Activated CD8-positive, alpha-beta T cell treated with anti-CD3 and anti-CD28 coated beads for 36 hours (primary cell): ENCODE measurements at regions of chr11 and their contacts with region 1.

Region 1: DNA sequence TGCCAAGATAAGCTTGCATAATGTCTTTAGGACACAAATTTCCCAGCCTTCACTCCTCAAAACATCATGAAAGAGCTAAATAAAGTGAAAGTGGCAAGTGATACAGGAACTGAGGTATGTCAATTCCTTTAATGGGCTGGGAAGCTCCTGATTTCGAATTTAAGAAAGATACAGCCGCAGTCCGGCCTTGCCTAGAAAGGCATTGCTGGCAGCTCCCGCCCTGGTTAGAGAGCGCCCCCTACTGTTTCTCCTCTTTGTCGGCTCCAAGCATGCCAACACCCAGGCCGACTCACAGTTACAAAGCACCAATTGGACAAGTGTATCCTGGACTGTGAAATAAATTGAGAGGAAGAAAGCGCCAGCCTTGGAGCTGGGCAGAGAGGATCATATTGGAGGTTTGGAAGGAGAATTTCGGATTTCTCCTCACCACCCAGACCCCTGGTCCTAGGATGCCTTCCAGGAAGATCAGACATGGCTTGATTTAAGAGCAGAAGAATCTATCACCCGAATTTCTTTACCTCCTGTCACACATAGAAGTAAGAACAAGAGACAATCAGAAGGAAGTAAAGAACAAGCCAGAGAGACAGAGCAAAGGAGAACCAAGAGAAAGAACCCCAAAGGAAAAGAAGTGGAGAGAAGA is 84.0 kb downstream of the FAM76B start:
- DNase-seq: peak; percentile 91
- ATAC-seq: peak; percentile 83
- H3K4me3 Mint-ChIP-seq: no peak overlapping the region
- H3K27ac Mint-ChIP-seq: no peak overlapping the region
- H3K4me1 Mint-ChIP-seq: peaks cover 9% of the 10 kb centered on the region
- H3K27me3 Mint-ChIP-seq: peaks cover 5% of the 10 kb centered on the region
- CTCF ChIP-seq: peak; percentile 86

Region 2: DNA sequence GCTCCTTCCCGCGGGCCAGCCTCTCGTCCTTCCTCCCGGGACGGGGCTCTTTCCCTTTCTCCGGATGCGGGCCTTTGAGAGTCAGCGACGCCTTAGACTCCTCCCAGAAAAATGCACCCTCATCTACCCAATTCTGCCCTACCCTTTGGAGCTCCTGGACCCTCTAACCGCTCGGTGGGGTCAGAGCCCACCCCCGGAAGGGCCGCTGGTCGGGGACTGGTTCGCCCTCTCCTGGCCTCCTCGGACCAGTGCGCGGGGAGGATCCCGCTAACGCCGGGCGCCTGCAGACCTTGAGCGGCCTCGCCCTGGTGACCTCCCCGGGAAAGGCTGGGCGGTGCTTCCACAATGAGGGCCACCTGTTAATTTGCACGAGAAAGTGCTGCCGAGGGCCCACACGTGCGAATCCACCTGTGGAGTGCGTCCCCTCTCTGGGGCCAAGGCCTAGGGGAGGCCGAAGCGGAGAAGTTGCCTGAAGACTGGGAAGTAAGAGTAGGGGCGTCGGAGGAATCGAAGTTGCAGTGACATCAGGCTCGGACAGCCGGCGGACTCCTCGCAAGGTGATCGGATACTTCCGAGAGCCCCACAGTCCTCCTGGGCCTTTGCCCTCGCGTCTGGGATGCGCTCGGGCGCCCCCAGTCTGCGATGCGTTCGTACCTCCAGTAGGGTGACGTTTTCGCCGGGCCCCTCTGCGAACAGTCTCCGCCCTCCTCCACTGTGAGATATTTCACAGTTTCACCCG is 554.5 kb before region 1 on chr11:
- CTCF ChIA-PET with region 1: interaction called, 294 read pairs
- POLR2A ChIA-PET with region 1: interaction called, 4 read pairs
- intact Hi-C with region 1: loop called (anchors 1 kb)
- DNase-seq: peak; percentile 96
- ATAC-seq: peak; percentile 95
- H3K4me3 Mint-ChIP-seq: peak overlapping the region; percentile 87
- H3K27ac Mint-ChIP-seq: peak overlapping the region; percentile 85
- H3K4me1 Mint-ChIP-seq: peaks cover 34% of the 10 kb centered on the region
- H3K27me3 Mint-ChIP-seq: peaks cover 5% of the 10 kb centered on the region
- CTCF ChIP-seq: no peak

Region 3: GRCh38 chr11:95193541-95193940 is 512.1 kb before region 1 on chr11:
- CTCF ChIA-PET with region 1: interaction called, 10 read pairs
- POLR2A ChIA-PET with region 1: no interaction called
- intact Hi-C with region 1: no loop called
- DNase-seq: no peak
- ATAC-seq: peak; percentile 77
- H3K4me3 Mint-ChIP-seq: no peak overlapping the region
- H3K27ac Mint-ChIP-seq: no peak overlapping the region
- H3K4me1 Mint-ChIP-seq: peaks cover 27% of the 10 kb centered on the region
- H3K27me3 Mint-ChIP-seq: no peaks in the 10 kb centered on the region
- CTCF ChIP-seq: no peak

Region 4: DNA sequence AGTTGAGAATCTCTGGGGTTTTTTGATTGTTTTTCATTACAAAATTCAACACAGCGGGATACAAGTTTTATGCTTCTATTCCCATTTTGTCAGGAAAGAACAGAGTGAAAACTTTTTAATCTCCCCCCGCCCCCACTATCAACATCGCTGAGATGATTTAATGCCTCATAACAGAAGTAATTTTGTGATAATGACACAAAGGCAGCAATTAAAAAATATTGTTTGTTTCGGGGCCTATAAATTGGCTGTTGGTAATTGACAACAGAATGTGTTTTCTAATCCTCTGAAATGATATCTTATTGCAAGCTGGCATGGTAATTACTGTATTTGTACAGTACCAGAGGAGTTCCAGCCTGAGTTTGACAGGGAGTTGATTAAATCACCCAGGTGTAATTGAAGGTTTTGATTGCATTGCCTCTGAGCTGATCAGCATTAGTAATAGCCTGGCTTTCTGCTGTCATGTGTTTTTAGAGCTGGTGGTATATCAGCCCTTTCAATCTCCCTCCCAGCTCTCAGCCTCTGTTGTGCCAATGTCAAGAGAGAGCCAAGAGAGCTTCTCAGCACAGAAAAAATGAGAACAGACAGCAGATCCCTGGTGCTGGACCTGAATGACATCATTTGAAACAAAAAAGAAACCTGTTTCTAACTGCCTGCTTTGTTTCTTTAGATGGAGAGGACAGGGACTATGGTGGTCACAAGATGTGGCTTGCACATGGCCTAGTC is 181.1 kb before region 1 on chr11:
- CTCF ChIA-PET with region 1: interaction called, 14 read pairs
- POLR2A ChIA-PET with region 1: no interaction called
- intact Hi-C with region 1: no loop called
- DNase-seq: no peak
- ATAC-seq: no peak
- H3K4me3 Mint-ChIP-seq: no peak overlapping the region
- H3K27ac Mint-ChIP-seq: no peak overlapping the region
- H3K4me1 Mint-ChIP-seq: no peaks in the 10 kb centered on the region
- H3K27me3 Mint-ChIP-seq: peaks cover 2% of the 10 kb centered on the region
- CTCF ChIP-seq: no peak

Region 5: GRCh38 chr11:95659088-95659487 is 46.5 kb before region 1 on chr11:
- CTCF ChIA-PET with region 1: interaction called, 10 read pairs
- POLR2A ChIA-PET with region 1: no interaction called
- intact Hi-C with region 1: no loop called
- DNase-seq: no peak
- ATAC-seq: no peak
- H3K4me3 Mint-ChIP-seq: no peak overlapping the region
- H3K27ac Mint-ChIP-seq: no peak overlapping the region
- H3K4me1 Mint-ChIP-seq: peaks cover 29% of the 10 kb centered on the region
- H3K27me3 Mint-ChIP-seq: no peaks in the 10 kb centered on the region
- CTCF ChIP-seq: no peak

Region 6: GRCh38 chr11:95715777-95716241 is 10.2 kb after region 1 on chr11:
- CTCF ChIA-PET with region 1: interaction called, 34 read pairs
- POLR2A ChIA-PET with region 1: interaction called, 3 read pairs
- intact Hi-C with region 1: no loop called
- DNase-seq: peak; percentile 81
- ATAC-seq: peak; percentile 79
- H3K4me3 Mint-ChIP-seq: no peak overlapping the region
- H3K27ac Mint-ChIP-seq: peak overlapping the region; percentile 74
- H3K4me1 Mint-ChIP-seq: peaks cover 47% of the 10 kb centered on the region
- H3K27me3 Mint-ChIP-seq: peaks cover 3% of the 10 kb centered on the region
- CTCF ChIP-seq: no peak

Region 7: DNA sequence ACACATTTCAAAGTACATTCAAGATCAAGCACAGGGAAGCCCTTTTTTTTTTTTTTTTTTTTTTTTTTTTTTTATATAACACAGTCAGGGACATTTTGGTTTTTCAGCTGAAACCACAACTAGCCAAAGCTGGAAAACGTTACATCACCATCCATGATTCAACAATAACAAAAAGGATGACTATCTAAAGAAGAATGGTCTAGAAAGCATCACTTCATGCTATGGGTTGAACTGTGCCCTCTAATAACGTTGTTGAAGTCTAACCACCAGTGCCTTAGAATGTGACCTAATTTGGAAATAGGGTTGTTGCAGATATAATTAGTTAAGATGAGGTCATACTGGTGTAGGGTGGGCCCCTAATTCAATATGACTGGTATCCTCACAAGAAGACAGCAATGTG is 171.7 kb after region 1 on chr11:
- CTCF ChIA-PET with region 1: no interaction called
- POLR2A ChIA-PET with region 1: no interaction called
- intact Hi-C with region 1: no loop called
- DNase-seq: peak; percentile 15
- ATAC-seq: peak; percentile 94
- H3K4me3 Mint-ChIP-seq: no peak overlapping the region
- H3K27ac Mint-ChIP-seq: peak overlapping the region; percentile 46
- H3K4me1 Mint-ChIP-seq: peaks cover 17% of the 10 kb centered on the region
- H3K27me3 Mint-ChIP-seq: no peaks in the 10 kb centered on the region
- CTCF ChIP-seq: no peak